ENCODE measurements at regions of chr10 and their contacts with region 1.

Region 1: GRCh38 chr10:63866075-63866746 is 345.0 kb downstream of the REEP3 start:
- DNase-seq: peak; percentile 34 to 67 (median 58)
- H3K4me3 ChIP-seq: peak overlapping the region in 5 of 7 experiments; percentile 13 to 65 (median 29)
- H3K27ac ChIP-seq: no peak overlapping the region
- H3K4me1 ChIP-seq: peaks cover 0 to 11% (median 5%) of the 10 kb centered on the region in 4 experiments
- H3K27me3 ChIP-seq: peaks cover 0 to 17% (median 13%) of the 10 kb centered on the region in 5 experiments

Region 2: GRCh38 chr10:63878428-63878827 is 12.2 kb after region 1 on chr10:
- CTCF ChIA-PET with region 1: interaction called, 12 read pairs
- POLR2A ChIA-PET with region 1: no interaction called
- DNase-seq: no peak
- H3K4me3 ChIP-seq: no peak overlapping the region
- H3K27ac ChIP-seq: no peak overlapping the region
- H3K4me1 ChIP-seq: no peaks in the 10 kb centered on the region
- H3K27me3 ChIP-seq: no peaks in the 10 kb centered on the region